CD8-positive, alpha-beta memory T cell (primary cell): ENCODE measurements at regions of chr3 and their contacts with region 1.

Region 1: DNA sequence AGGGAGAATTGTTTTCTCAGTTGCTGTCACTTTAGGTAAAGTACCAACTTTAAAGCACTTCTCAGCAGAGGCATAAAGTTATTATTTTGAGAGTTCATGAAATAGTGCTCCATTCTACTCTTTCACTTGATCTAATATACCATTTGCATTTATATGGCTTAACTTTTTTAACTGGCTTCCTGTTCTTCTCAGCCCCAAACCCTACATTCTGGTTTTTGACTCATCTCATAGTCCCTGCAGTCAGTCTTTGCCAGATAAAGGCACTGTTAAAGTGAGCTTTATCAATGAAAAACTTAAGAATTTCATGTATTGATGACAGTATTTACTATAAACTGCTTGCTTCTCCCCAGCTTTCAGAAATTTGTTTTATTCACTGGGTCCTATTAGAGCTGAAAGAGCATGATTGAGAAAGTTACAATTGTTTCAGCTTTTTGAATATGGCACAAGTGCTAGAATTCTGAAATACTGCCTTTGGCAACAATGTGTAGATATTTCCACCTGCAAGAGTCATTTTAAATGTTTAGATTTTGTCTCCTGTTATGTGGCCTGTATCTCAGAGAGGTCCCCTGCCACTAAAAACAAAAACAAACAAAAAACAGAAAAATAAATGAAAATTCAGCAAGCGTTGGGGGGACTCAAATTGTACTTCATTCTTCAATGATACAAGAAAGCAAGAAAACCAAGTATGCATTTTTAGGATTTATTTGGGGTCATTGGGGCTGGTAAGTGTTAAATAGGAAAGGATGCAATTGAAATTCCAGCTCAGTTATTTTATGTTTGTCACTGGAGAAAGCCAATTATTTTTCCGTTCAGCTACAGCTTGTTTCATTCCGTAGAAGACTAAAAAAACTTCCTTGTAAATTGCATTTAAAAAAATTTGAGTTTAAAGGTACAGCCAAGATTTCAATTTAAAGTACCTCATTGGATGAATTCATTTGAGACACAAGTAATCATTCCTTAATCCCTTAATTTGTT is 28.6 kb downstream of the TGFBR2 start:
- DNase-seq: no peak
- H3K4me3 ChIP-seq: peak overlapping the region; percentile 2
- H3K4me3 Mint-ChIP-seq: peak overlapping the region in 6 of 7 donors; percentile 52 to 87 (median 71)
- H3K27ac ChIP-seq: no peak overlapping the region
- H3K27ac Mint-ChIP-seq: peak overlapping the region; percentile 89 to 95 (median 91)
- H3K4me1 ChIP-seq: peaks cover 98% of the 10 kb centered on the region
- H3K4me1 Mint-ChIP-seq: peaks cover 96 to 100% (median 98%) of the 10 kb centered on the region in 3 donors
- H3K27me3 ChIP-seq: no peaks in the 10 kb centered on the region
- H3K27me3 Mint-ChIP-seq: no peaks in the 10 kb centered on the region

Region 2: DNA sequence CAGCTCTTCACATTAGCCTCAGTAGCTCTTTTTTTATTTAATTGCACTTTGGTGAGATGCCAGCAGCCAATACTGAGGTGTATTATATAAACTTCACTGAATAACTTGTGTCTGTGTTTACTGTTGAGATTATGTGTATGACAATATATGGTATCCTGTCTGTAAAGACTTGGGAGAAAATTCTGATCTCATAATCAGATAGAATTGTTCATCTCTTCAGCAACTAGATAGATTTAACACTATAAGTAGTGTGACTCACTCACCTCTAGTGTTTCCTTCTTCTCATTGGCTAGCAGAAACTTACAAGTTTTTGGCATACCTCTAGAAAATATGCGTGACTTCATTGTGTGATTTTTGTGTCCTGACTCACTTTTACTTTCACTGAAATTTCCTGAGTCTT is 96.3 kb before region 1 on chr3:
- CTCF ChIA-PET with region 1: no interaction called
- POLR2A ChIA-PET with region 1: no interaction called
- DNase-seq: no peak
- H3K4me3 ChIP-seq: no peak overlapping the region
- H3K4me3 Mint-ChIP-seq: no peak overlapping the region
- H3K27ac ChIP-seq: no peak overlapping the region
- H3K27ac Mint-ChIP-seq: no peak overlapping the region
- H3K4me1 ChIP-seq: no peaks in the 10 kb centered on the region
- H3K4me1 Mint-ChIP-seq: no peaks in the 10 kb centered on the region
- H3K27me3 ChIP-seq: no peaks in the 10 kb centered on the region
- H3K27me3 Mint-ChIP-seq: no peaks in the 10 kb centered on the region

Region 3: GRCh38 chr3:30649572-30650318 is 14.7 kb after region 1 on chr3:
- CTCF ChIA-PET with region 1: interaction called, 12 read pairs
- POLR2A ChIA-PET with region 1: interaction called, 11 read pairs
- DNase-seq: no peak
- H3K4me3 ChIP-seq: no peak overlapping the region
- H3K4me3 Mint-ChIP-seq: no peak overlapping the region
- H3K27ac ChIP-seq: no peak overlapping the region
- H3K27ac Mint-ChIP-seq: peak overlapping the region in 7 of 8 donors; percentile 37 to 99 (median 75)
- H3K4me1 ChIP-seq: peaks cover 96% of the 10 kb centered on the region
- H3K4me1 Mint-ChIP-seq: peaks cover 83 to 100% (median 99%) of the 10 kb centered on the region in 3 donors
- H3K27me3 ChIP-seq: no peaks in the 10 kb centered on the region
- H3K27me3 Mint-ChIP-seq: no peaks in the 10 kb centered on the region